ENCODE measurements at regions of chr4 and their contacts with region 1.

Region 1: GRCh38 chr4:11698846-11699590 is 270.3 kb upstream of the HS3ST1 start:
- DNase-seq: peak; percentile 92
- ATAC-seq: peak; percentile 90
- H3K4me3 ChIP-seq: peak overlapping the region; percentile 20; the same call in 1 of the 2 replicates
- H3K27ac ChIP-seq: peak overlapping the region; percentile 95
- H3K4me1 ChIP-seq: peaks cover 58% of the 10 kb centered on the region
- H3K27me3 ChIP-seq: no peaks in the 10 kb centered on the region
- CTCF ChIP-seq: no peak

Region 2: GRCh38 chr4:11650801-11651596 is 48.0 kb before region 1 on chr4:
- CTCF ChIA-PET with region 1: no interaction called
- POLR2A ChIA-PET with region 1: no interaction called
- intact Hi-C with region 1: loop called (anchors 5 kb)
- DNase-seq: peak; percentile 50
- ATAC-seq: peak; percentile 73
- H3K4me3 ChIP-seq: peak overlapping the region; percentile 51
- H3K27ac ChIP-seq: peak overlapping the region; percentile 69
- H3K4me1 ChIP-seq: peaks cover 8% of the 10 kb centered on the region
- H3K27me3 ChIP-seq: no peaks in the 10 kb centered on the region
- CTCF ChIP-seq: 0 out of 2 replicates have a peak, but pooled peaks have one; percentile 11

Region 3: DNA sequence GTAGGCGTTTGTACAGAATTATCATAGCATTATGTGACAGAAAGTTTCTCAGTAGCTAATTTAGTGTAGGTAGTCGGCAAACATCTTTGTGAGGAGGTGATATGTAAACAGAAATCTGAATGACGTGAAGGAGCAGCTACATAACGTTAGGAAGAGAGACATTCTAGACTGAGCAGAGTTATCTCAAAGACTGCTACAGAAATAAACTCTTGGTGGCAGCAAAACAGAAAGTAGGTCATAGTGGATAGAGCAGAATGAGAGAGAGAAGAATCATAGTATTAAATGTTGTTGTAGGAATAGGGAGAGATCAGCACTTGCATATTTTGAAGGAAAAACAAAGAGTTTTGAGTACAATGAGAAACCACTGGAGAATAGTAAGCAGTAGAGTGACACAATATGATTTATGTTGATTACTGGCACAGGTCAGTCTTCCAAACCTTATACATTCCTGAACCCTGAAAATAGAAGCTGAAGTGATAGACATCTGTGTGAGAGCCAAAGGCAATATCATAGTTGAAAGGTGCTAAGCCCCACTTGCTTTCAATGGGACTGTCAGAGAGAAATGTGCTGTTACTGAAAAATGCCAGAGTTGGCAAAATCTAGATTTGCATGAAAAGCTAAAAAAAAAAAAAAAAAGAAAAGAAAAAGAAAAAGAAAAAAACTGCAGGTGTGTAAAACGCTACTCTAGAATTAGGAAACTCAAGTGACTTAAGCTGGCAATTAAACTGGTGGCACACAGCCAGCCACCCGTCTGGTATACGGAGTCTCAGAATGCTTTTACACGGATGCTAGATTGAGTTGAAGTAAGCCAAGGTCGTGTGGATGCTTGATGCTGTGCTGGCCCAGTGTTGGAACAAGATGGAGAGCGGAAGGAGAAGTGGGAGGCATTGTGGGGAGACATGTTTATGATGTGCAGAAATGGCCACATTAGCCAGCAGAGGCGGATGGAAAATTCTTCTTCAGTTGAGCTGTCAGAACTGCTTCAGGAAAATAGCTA is 479.9 kb after region 1 on chr4:
- CTCF ChIA-PET with region 1: no interaction called
- POLR2A ChIA-PET with region 1: no interaction called
- intact Hi-C with region 1: no loop called
- DNase-seq: no peak
- ATAC-seq: no peak
- H3K4me3 ChIP-seq: no peak overlapping the region
- H3K27ac ChIP-seq: no peak overlapping the region
- H3K4me1 ChIP-seq: no peaks in the 10 kb centered on the region
- H3K27me3 ChIP-seq: no peaks in the 10 kb centered on the region
- CTCF ChIP-seq: no peak